Prostate gland (tissue), 2 donors: ENCODE measurements at regions of chr1 and their contacts with region 1.

Region 1: GRCh38 chr1:203480525-203481084 is 5.0 kb downstream of the PRELP start:
- DNase-seq: peak; percentile 39
- H3K4me3 ChIP-seq: no peak overlapping the region
- H3K27ac ChIP-seq: peak overlapping the region; percentile 46 to 78
- H3K4me1 ChIP-seq: no peaks in the 10 kb centered on the region
- H3K27me3 ChIP-seq: no peaks in the 10 kb centered on the region
- CTCF ChIP-seq: no peak
- POLR2A ChIP-seq: no peak

Region 2: GRCh38 chr1:203408486-203409427 is 71.8 kb before region 1 on chr1:
- intact Hi-C with region 1: loop called (anchors 10 kb)
- DNase-seq: peak; percentile 30
- H3K4me3 ChIP-seq: no peak overlapping the region
- H3K27ac ChIP-seq: peak overlapping the region; percentile 62 to 68
- H3K4me1 ChIP-seq: no peaks in the 10 kb centered on the region
- H3K27me3 ChIP-seq: no peaks in the 10 kb centered on the region
- CTCF ChIP-seq: no peak
- POLR2A ChIP-seq: no peak

Region 3: GRCh38 chr1:203463469-203464062 is 17.0 kb before region 1 on chr1:
- intact Hi-C with region 1: loop called (anchors 2 kb)
- DNase-seq: no peak
- H3K4me3 ChIP-seq: no peak overlapping the region
- H3K27ac ChIP-seq: peak overlapping the region; percentile 78 to 85
- H3K4me1 ChIP-seq: peaks cover 6% of the 10 kb centered on the region
- H3K27me3 ChIP-seq: no peaks in the 10 kb centered on the region
- CTCF ChIP-seq: peak in 1 of 4 experiments; percentile 41
- POLR2A ChIP-seq: no peak

Region 4: GRCh38 chr1:203520315-203520714 is 39.7 kb after region 1 on chr1:
- intact Hi-C with region 1: no loop called
- DNase-seq: no peak
- H3K4me3 ChIP-seq: no peak overlapping the region
- H3K27ac ChIP-seq: no peak overlapping the region
- H3K4me1 ChIP-seq: no peaks in the 10 kb centered on the region
- H3K27me3 ChIP-seq: no peaks in the 10 kb centered on the region
- CTCF ChIP-seq: no peak
- POLR2A ChIP-seq: no peak